CD4-positive, alpha-beta memory T cell (primary cell): ENCODE measurements at regions of chr17 and their contacts with region 1.

Region 1: DNA sequence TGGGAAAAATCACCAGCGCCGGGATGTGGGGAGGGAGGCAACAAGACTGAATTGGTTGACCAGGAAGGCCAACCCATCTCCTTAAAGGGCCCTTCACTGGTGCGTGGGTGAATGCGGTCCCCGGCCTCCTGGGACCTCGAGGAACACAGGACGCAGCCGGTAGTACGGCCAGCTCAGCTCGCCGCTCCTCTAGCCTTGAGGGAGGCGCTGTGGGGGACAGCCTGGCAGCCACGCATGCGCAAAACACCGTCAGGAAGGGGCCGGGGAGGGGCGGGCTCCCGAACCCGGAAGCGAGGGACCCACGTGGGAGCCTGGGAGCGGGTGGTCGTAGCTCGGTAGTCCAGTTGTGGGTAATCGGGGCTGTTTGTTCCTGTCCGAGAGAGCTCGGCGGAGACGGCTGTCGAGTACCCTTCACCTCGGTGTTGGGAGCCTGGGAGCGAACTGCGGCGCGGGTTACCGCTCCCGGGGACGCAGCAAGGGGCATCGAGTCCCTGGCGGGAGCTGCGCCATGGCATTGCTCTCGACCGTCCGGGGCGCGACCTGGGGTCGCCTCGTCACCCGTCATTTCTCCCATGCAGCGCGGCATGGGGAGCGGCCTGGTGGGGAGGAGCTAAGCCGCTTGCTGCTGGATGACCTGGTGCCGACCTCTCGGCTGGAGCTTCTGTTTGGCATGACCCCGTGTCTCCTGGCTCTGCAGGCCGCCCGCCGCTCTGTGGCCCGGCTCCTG is at the start of gene MRM1:
- DNase-seq: peak; percentile 80 to 86 (median 82)
- H3K4me3 ChIP-seq: peak within 1 kb of the TSS; percentile 76 to 86
- H3K4me3 Mint-ChIP-seq: peak within 1 kb of the TSS; percentile 84 to 95 (median 93)
- H3K27ac ChIP-seq: peak within 1 kb of the TSS; percentile 74
- H3K27ac Mint-ChIP-seq: peak within 1 kb of the TSS; percentile 89 to 97 (median 94)
- H3K4me1 ChIP-seq: peaks cover 34% of the 10 kb centered on the region
- H3K4me1 Mint-ChIP-seq: peaks cover 27 to 45% (median 36%) of the 10 kb centered on the region in 4 donors
- H3K27me3 ChIP-seq: no peaks in the 10 kb centered on the region
- H3K27me3 Mint-ChIP-seq: no peaks in the 10 kb centered on the region
- total RNA-seq, gene MRM1: 11.8 to 13.3 TPM

Region 2: DNA sequence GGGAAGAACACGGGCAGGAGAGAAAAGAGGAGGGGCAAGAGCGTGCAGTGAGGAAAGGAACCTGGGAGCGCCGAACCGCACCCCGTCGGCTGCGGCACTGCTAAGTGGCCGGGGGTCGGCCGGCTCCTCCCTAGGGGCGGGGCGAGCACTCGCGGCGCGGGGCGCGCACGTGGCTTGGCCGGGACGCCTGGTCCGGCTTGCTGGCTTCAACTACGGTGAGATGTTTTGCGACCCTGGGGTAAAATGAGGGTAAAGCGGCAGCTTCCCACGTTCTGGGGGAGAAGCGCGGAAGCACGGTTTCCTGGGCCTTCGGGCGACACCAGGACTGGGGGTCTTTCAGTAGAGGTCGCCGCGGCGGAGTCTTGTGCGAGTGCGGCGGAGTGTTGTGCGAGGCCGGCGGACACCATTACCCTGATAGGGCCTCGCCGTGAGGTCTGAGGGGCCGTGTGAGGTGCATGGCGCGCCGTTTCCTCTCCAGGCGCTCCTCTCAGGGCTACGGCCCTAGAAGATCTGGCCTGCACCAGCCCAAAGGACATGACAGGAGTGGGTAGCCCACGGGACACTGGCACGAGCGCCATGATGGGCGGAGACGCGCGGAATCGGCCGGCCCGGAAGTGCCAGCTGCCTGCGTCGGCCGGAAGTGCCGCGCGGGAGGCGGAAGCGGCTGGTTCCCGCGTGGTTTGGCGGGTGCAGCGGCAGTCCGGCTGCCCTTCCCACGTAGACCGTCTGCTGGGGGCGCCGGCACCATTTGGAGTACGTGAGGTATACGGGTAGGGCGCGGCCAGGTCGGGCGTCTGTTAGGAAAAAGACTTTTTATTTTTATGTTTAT is 66.4 kb before region 1 on chr17 and contains the starts of genes MYO19 and PIGW:
- CTCF ChIA-PET with region 1: interaction called, 19 read pairs
- POLR2A ChIA-PET with region 1: interaction called, 37 read pairs
- intact Hi-C with region 1: loop called (anchors 1 kb)
- DNase-seq: peak; percentile 81 to 87 (median 85)
- H3K4me3 ChIP-seq: peak within 1 kb of the TSS; percentile 58 to 99
- H3K4me3 Mint-ChIP-seq: peak within 1 kb of the TSS; percentile 90 to 97 (median 95)
- H3K27ac ChIP-seq: peak within 1 kb of the TSS; percentile 82
- H3K27ac Mint-ChIP-seq: peak within 1 kb of the TSS; percentile 91 to 97 (median 96)
- H3K4me1 ChIP-seq: peaks cover 12% of the 10 kb centered on the region
- H3K4me1 Mint-ChIP-seq: peaks cover 9 to 27% (median 19%) of the 10 kb centered on the region in 4 donors
- H3K27me3 ChIP-seq: no peaks in the 10 kb centered on the region
- H3K27me3 Mint-ChIP-seq: no peaks in the 10 kb centered on the region
- total RNA-seq, gene MYO19: 79.2 to 85.8 TPM
- total RNA-seq, gene PIGW: 4.7 to 5.1 TPM

Region 3: GRCh38 chr17:36586138-36586537 is 15.3 kb before region 1 on chr17:
- CTCF ChIA-PET with region 1: interaction called, 34 read pairs
- POLR2A ChIA-PET with region 1: interaction called, 39 read pairs
- intact Hi-C with region 1: loop called (anchors 1 kb)
- DNase-seq: no peak
- H3K4me3 ChIP-seq: no peak overlapping the region
- H3K4me3 Mint-ChIP-seq: no peak overlapping the region
- H3K27ac ChIP-seq: no peak overlapping the region
- H3K27ac Mint-ChIP-seq: no peak overlapping the region
- H3K4me1 ChIP-seq: peaks cover 3% of the 10 kb centered on the region
- H3K4me1 Mint-ChIP-seq: peaks cover 3 to 5% (median 4%) of the 10 kb centered on the region in 4 donors
- H3K27me3 ChIP-seq: no peaks in the 10 kb centered on the region
- H3K27me3 Mint-ChIP-seq: no peaks in the 10 kb centered on the region

Region 4: GRCh38 chr17:36629252-36629847 is 27.9 kb after region 1 on chr17:
- CTCF ChIA-PET with region 1: interaction called, 14 read pairs
- POLR2A ChIA-PET with region 1: no interaction called
- intact Hi-C with region 1: loop called (anchors 2 kb)
- DNase-seq: peak; percentile 66 to 77 (median 70)
- H3K4me3 ChIP-seq: no peak overlapping the region
- H3K4me3 Mint-ChIP-seq: no peak overlapping the region
- H3K27ac ChIP-seq: no peak overlapping the region
- H3K27ac Mint-ChIP-seq: no peak overlapping the region
- H3K4me1 ChIP-seq: no peaks in the 10 kb centered on the region
- H3K4me1 Mint-ChIP-seq: peaks cover 0 to 4% (median 1%) of the 10 kb centered on the region in 4 donors
- H3K27me3 ChIP-seq: no peaks in the 10 kb centered on the region
- H3K27me3 Mint-ChIP-seq: peaks cover 5 to 9% of the 10 kb centered on the region in 2 donors

Region 5: GRCh38 chr17:36837195-36837938 is 235.9 kb after region 1 on chr17:
- CTCF ChIA-PET with region 1: no interaction called
- POLR2A ChIA-PET with region 1: no interaction called
- intact Hi-C with region 1: no loop called
- DNase-seq: no peak
- H3K4me3 ChIP-seq: no peak overlapping the region
- H3K4me3 Mint-ChIP-seq: no peak overlapping the region
- H3K27ac ChIP-seq: no peak overlapping the region
- H3K27ac Mint-ChIP-seq: no peak overlapping the region
- H3K4me1 ChIP-seq: no peaks in the 10 kb centered on the region
- H3K4me1 Mint-ChIP-seq: no peaks in the 10 kb centered on the region
- H3K27me3 ChIP-seq: no peaks in the 10 kb centered on the region
- H3K27me3 Mint-ChIP-seq: peaks cover 5% of the 10 kb centered on the region in 2 donors

Region 6: GRCh38 chr17:37047631-37048104 is 446.2 kb after region 1 on chr17:
- CTCF ChIA-PET with region 1: interaction called, 62 read pairs
- POLR2A ChIA-PET with region 1: interaction called, 5 read pairs
- intact Hi-C with region 1: loop called (anchors 1 kb)
- DNase-seq: peak; percentile 62 to 72 (median 70)
- H3K4me3 ChIP-seq: no peak overlapping the region
- H3K4me3 Mint-ChIP-seq: no peak overlapping the region
- H3K27ac ChIP-seq: no peak overlapping the region
- H3K27ac Mint-ChIP-seq: peak overlapping the region in 6 of 7 donors; percentile 62 to 77 (median 71)
- H3K4me1 ChIP-seq: no peaks in the 10 kb centered on the region
- H3K4me1 Mint-ChIP-seq: peaks cover 9 to 13% (median 10%) of the 10 kb centered on the region in 4 donors
- H3K27me3 ChIP-seq: no peaks in the 10 kb centered on the region
- H3K27me3 Mint-ChIP-seq: no peaks in the 10 kb centered on the region

Region 7: GRCh38 chr17:37373530-37374159 is 772.2 kb after region 1 on chr17:
- CTCF ChIA-PET with region 1: interaction called, 9 read pairs
- POLR2A ChIA-PET with region 1: interaction called, 3 read pairs
- intact Hi-C with region 1: loop called (anchors 1 kb)
- DNase-seq: peak; percentile 57 to 68 (median 65)
- H3K4me3 ChIP-seq: no peak overlapping the region
- H3K4me3 Mint-ChIP-seq: no peak overlapping the region
- H3K27ac ChIP-seq: no peak overlapping the region
- H3K27ac Mint-ChIP-seq: no peak overlapping the region
- H3K4me1 ChIP-seq: no peaks in the 10 kb centered on the region
- H3K4me1 Mint-ChIP-seq: peaks cover 0 to 3% (median 1%) of the 10 kb centered on the region in 4 donors
- H3K27me3 ChIP-seq: no peaks in the 10 kb centered on the region
- H3K27me3 Mint-ChIP-seq: no peaks in the 10 kb centered on the region